ENCODE measurements at regions of chr21 and their contacts with region 1.

Region 1: DNA sequence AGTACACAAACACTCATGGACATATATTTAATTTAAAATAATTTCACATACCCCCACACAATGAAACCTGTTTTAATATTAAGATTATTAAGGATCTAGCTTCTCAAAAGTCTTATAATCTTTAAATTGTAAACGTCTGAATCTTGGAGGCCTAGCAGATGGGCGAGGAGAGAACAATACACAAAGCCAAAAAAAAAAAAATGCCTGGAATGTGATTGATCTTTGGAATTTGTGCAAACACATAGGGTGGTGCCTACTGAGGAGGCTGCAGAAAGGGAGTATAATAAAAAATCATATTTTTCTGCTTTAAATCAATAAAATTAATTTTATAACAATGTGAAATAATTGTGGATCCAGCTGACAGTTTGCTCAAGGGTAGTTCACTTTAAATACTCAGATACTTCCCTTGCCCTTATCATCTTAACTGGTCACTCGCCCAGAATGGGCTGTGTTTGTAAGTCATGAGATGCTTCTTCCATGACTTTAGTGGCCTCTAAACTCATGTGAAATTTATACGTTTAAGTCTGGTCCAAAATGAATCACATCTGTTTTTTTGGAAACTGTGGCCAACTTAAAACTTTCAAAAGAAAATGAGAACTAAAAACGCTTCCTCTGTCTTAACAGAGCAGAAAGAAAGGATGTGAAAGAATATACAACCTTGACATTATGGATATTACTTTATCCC is 802.8 kb upstream of the CXADR start:
- DNase-seq: no peak
- ATAC-seq: peak; percentile 51

Region 2: DNA sequence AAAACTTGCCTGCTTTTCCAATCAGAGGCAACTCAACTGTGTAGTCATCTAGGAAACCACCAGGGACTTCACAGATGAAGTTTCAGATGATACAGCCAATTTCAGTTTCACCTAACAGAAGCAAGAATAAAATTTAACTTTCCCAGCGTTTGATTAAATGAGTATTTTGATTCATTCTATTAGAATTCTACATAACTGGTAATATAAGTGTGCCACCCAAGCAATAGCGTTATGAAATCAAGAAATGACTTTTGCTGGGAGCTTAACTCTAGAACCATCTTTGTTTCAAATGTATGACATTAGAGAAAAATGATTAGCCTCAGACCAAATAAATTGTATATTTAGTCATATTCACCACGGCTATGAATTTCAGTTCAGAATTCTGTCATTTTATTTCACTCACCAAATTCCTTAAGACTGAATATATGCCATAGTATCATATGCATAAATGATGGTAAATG is 1884.5 kb before region 1 on chr21:
- intact Hi-C with region 1: loop called (anchors 5 kb)
- DNase-seq: no peak
- ATAC-seq: no peak

Region 3: GRCh38 chr21:16945580-16945979 is 235.6 kb after region 1 on chr21:
- intact Hi-C with region 1: no loop called
- DNase-seq: no peak
- ATAC-seq: no peak